MCF 10A (cell line): ENCODE measurements at regions of chr5 and their contacts with region 1.

Region 1: DNA sequence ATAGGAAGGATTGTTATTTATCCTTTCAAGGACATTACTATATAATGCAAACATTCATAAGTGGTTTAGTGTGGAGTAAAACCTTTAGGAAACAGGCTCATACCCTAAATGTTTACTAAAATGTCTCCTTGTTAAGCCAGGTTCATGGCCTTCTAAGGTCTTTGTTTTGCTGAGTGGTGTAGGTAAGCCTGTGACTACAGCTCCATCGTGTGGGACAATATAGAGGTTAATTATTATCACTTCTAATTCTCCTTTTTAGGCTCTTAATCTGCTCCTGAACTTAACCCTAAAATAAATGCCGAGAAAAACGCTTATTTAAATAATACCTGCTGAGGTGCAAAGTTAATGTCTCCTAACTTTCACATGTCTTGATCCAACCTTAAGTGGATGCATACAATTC is 43.8 kb downstream of the SPINK5 start:
- DNase-seq: peak; percentile 65
- H3K4me3 Mint-ChIP-seq: no peak overlapping the region
- H3K27ac Mint-ChIP-seq: no peak overlapping the region
- H3K4me1 Mint-ChIP-seq: no peaks in the 10 kb centered on the region
- H3K27me3 Mint-ChIP-seq: no peaks in the 10 kb centered on the region
- CTCF ChIP-seq: peak; percentile 55

Region 2: GRCh38 chr5:147628058-147628895 is 479.3 kb before region 1 on chr5:
- CTCF ChIA-PET with region 1: interaction called, 3 read pairs
- POLR2A ChIA-PET with region 1: no interaction called
- intact Hi-C with region 1: loop called (anchors 10 kb)
- DNase-seq: peak; percentile 90
- H3K4me3 Mint-ChIP-seq: no peak overlapping the region
- H3K27ac Mint-ChIP-seq: no peak overlapping the region
- H3K4me1 Mint-ChIP-seq: no peaks in the 10 kb centered on the region
- H3K27me3 Mint-ChIP-seq: peaks cover 20% of the 10 kb centered on the region
- CTCF ChIP-seq: peak; percentile 91

Region 3: DNA sequence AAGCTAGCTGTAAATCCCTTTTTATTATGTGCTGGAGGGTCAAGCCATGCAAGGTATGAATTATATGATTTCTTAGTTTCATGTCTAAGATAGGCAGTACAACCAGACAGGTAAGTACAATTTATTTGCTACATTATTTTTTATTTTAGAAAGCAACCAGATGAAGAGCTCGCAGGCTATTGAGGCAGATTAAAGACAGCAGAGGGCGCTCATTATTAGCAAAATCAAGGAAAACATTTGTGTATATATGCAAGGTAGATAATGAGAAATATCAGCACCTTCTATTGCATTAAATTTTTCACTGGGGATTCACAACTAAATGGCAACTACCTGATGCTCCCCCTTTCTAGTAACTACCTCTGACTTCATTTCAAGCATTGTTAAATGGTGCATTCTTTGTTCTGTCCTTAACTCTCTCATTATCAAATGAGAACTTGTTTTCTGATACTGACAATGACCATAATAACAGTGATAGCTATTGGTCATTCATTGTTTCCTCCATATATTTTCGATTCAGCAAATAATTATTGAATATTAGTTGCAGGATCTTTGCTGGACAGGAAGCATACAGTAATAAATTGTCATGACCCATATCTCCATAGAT is 220.5 kb before region 1 on chr5:
- CTCF ChIA-PET with region 1: interaction called, 3 read pairs
- POLR2A ChIA-PET with region 1: no interaction called
- intact Hi-C with region 1: loop called (anchors 1 kb)
- DNase-seq: peak; percentile 75
- H3K4me3 Mint-ChIP-seq: no peak overlapping the region
- H3K27ac Mint-ChIP-seq: no peak overlapping the region
- H3K4me1 Mint-ChIP-seq: peaks cover 16% of the 10 kb centered on the region
- H3K27me3 Mint-ChIP-seq: no peaks in the 10 kb centered on the region
- CTCF ChIP-seq: peak; percentile 76

Region 4: DNA sequence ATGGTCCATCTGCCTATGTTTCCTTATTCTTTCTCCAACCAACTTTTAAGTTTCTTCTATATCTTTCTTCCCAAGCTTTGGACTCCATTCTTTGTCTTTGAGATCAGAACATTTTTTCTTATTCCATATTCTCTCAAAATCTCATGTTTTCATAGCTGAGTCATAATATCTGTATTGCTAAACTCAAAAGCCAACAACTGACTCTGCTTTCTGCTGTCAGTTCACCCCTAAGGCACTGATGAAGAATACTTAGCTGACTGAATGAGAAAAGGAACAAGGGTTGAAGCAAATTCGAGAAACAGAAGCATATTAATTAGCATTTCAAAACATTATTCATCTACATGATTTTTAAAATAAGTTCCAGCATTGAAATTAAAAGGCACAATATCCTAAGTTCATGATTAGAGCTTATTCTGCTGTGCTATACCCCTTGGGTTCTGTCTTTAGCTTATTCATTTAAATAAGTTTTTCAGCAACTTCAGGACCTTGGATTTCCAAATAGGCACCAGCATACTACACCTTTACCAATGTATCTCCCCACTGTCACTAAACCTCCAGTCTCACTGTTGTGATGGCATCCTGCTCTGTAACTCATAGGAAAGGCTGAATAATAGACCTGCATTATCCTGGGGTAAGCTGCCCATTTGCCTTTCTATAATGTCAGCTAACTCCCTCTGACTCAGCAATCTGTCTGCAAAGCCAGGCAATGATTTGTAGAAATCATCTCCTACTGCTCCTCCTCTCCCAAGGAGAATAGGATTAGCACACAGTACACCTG is 151.4 kb before region 1 on chr5:
- CTCF ChIA-PET with region 1: interaction called, 110 read pairs
- POLR2A ChIA-PET with region 1: interaction called, 17 read pairs
- intact Hi-C with region 1: no loop called
- DNase-seq: peak; percentile 58
- H3K4me3 Mint-ChIP-seq: no peak overlapping the region
- H3K27ac Mint-ChIP-seq: no peak overlapping the region
- H3K4me1 Mint-ChIP-seq: peaks cover 18% of the 10 kb centered on the region
- H3K27me3 Mint-ChIP-seq: no peaks in the 10 kb centered on the region
- CTCF ChIP-seq: no peak

Region 5: DNA sequence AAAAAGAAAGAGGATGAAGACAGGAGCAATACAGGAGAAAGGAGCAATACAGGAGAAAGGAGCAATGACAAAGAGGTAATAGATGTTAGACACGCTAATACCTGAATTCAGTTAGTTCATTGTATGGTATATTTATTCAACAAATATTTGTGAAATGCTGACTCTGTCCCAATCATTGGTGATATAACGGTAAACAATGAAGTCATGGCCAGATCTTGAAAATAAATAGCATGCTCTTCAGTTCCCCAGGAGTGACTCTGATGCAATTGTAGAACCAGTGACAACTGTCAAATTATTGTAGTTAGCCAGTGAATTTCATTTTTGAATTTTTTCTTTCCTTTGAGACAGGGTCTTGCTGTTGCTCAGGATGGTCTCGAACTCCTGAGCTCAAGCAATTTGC is 12.7 kb after region 1 on chr5:
- CTCF ChIA-PET with region 1: interaction called, 18 read pairs
- POLR2A ChIA-PET with region 1: no interaction called
- intact Hi-C with region 1: loop called (anchors 2 kb)
- DNase-seq: no peak
- H3K4me3 Mint-ChIP-seq: no peak overlapping the region
- H3K27ac Mint-ChIP-seq: no peak overlapping the region
- H3K4me1 Mint-ChIP-seq: no peaks in the 10 kb centered on the region
- H3K27me3 Mint-ChIP-seq: no peaks in the 10 kb centered on the region
- CTCF ChIP-seq: no peak